ENCODE measurements at regions of chr2 and their contacts with region 1.

Region 1: DNA sequence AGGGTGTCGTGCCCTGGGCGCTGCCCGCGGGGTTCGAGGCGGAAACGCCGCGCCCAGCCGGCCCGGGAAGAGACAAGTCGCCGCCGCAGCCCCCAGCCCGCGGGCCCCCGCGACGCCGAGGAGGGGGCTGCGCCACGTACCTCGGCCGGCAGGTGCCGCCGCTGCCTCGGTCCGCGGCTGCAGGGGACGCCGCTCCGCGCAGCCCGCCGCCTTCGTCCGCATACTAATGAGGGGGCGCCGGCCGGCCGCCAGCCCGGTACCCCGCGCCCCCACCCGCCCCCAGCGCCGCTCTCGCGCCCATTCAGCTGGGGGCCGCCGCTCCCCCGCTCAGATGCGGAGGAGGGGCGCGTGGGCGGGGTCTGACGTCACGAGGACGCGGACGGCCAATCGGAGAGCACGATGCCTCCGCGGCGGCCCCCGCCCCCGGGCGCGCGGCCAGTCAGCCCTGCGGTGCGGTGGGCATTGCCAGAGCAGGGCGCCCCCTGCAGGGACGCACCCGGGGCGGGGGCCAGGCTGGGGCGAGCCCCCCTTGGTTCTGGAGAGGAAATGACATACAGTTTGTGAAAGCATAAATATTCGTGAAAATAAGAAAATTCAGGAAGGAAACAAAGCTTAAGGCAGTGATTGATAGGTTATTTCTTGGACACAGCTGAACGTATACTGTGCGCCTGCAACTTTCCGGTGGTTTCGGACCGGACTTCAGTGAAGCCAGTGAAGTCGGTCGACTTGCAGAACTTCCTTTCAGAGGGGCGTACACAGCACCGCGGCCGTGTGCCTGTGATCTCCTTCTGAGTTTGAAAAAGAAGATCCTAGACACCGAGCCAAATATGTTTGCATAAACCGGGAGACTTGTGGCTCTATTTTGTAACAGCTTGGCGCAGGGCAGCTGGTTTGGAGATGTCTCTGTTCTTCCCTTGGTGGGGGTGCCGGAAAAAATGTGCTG is at the start of gene ST3GAL5:
- DNase-seq: no peak
- H3K4me3 ChIP-seq: peak within 1 kb of the TSS; percentile 76 to 79
- H3K27ac ChIP-seq: peak within 1 kb of the TSS; percentile 94
- H3K4me1 ChIP-seq: peaks cover 39% of the 10 kb centered on the region
- H3K27me3 ChIP-seq: no peaks in the 10 kb centered on the region
- CTCF ChIP-seq: peak in 2 of 3 experiments; percentile 49 to 60
- POLR2A ChIP-seq: peak in 1 of 2 donors; percentile 33
- total RNA-seq, gene ST3GAL5: 16.2 TPM

Region 2: DNA sequence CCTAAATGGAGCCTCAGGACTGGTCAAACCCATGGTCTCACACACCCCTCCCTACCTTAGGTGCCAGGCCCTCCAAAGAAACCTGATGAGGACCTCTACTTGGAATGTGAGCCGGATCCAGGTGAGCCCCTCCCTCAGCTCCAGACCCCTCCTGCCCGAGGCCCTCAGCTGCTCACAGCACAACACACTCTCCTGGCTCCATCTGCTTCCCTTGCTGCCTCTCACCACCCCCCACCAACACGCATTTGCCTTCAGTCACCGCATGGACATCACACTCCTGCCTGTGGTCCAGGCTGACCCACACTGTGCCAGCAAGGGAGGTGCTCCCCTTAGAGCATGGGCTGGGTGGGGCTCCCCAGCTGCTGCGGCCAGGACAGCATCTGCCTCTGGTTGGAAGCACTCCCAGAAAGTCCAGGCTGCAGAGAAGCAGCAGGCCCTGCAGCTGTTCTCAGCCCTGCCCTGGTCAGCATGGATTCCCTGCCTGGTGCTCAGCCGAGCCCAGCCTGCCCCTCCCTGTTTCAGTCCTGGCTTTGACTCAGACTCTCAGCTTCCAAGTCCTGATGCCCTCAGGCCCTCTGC is 455.4 kb before region 1 on chr2:
- intact Hi-C with region 1: no loop called
- DNase-seq: no peak
- H3K4me3 ChIP-seq: no peak overlapping the region
- H3K27ac ChIP-seq: peak overlapping the region; percentile 90
- H3K4me1 ChIP-seq: peaks cover 50% of the 10 kb centered on the region
- H3K27me3 ChIP-seq: no peaks in the 10 kb centered on the region
- CTCF ChIP-seq: no peak
- POLR2A ChIP-seq: no peak

Region 3: DNA sequence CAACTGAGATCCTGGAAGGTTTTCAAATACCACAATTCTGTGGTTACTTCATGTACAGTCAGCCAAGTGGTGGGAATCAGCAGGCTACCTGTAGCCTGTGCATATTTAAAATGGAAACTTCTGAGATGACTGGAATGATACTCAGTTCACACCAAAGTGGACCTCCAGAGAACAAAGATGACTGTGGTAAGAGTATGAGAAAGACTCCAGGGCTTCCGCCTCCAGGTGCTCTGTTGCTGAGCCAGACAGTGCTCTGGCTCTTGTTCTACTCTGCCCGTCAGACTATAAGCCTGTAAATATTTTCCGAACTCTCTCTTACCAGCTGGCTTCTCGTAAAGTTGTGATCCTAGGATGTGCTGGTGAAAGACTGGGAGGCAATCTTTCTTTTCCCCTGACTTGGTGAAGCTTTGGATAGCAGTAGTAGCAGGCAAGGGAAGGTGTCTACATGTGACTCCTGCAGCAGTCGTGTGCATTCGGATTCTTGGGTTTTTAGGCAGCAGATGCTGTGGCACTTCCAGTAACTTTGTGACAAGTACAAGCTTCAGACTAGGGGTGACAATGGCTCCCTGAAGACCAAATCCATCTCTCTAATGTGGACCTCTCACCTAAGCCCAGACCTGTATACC is 23.3 kb before region 1 on chr2:
- intact Hi-C with region 1: no loop called
- DNase-seq: no peak
- H3K4me3 ChIP-seq: no peak overlapping the region
- H3K27ac ChIP-seq: no peak overlapping the region
- H3K4me1 ChIP-seq: no peaks in the 10 kb centered on the region
- H3K27me3 ChIP-seq: no peaks in the 10 kb centered on the region
- CTCF ChIP-seq: no peak
- POLR2A ChIP-seq: no peak

Region 4: DNA sequence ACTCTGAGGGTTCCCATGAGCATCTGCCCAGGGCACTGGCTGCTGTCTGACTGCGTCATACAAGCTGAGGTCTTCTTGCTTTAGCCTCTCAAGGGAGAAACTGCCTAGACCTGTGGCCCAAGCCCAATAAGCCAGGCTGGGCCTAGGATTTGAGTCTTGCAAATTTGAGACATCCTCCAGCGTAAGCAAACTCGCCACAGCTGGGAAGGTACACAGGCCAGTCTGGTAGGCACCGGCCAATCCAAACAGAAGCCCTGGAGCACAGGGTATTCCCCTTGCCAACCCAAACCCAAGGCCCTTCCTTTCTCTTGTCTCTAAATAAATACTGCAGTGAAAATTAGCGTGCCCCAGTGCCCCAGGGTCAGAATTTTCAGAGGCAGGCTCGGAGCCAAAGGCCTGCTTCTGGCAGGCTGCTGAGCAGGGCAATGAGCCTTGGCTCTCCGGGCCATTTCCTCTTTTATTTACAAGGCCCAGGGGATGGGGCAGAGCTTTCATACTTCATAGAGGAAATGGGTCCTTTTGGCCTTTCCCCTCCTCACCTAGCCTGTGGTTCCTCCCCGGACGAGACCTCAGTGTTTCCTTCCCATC is 183.4 kb after region 1 on chr2:
- intact Hi-C with region 1: loop called (anchors 5 kb)
- DNase-seq: no peak
- H3K4me3 ChIP-seq: no peak overlapping the region
- H3K27ac ChIP-seq: peak overlapping the region; percentile 42
- H3K4me1 ChIP-seq: peaks cover 11% of the 10 kb centered on the region
- H3K27me3 ChIP-seq: no peaks in the 10 kb centered on the region
- CTCF ChIP-seq: no peak
- POLR2A ChIP-seq: no peak